Lower leg skin (tissue), 4 donors: ENCODE measurements at regions of chr9 and their contacts with region 1.

Region 1: GRCh38 chr9:34869390-34869789 is 88.7 kb upstream of the PHF24 start:
- DNase-seq: no peak
- H3K4me3 ChIP-seq: no peak overlapping the region
- CTCF ChIP-seq: no peak
- POLR2A ChIP-seq: no peak

Region 2: GRCh38 chr9:34777666-34778065 is 91.7 kb before region 1 on chr9:
- intact Hi-C with region 1: loop called (anchors 10 kb)
- DNase-seq: no peak
- H3K4me3 ChIP-seq: no peak overlapping the region
- CTCF ChIP-seq: no peak
- POLR2A ChIP-seq: no peak

Region 3: DNA sequence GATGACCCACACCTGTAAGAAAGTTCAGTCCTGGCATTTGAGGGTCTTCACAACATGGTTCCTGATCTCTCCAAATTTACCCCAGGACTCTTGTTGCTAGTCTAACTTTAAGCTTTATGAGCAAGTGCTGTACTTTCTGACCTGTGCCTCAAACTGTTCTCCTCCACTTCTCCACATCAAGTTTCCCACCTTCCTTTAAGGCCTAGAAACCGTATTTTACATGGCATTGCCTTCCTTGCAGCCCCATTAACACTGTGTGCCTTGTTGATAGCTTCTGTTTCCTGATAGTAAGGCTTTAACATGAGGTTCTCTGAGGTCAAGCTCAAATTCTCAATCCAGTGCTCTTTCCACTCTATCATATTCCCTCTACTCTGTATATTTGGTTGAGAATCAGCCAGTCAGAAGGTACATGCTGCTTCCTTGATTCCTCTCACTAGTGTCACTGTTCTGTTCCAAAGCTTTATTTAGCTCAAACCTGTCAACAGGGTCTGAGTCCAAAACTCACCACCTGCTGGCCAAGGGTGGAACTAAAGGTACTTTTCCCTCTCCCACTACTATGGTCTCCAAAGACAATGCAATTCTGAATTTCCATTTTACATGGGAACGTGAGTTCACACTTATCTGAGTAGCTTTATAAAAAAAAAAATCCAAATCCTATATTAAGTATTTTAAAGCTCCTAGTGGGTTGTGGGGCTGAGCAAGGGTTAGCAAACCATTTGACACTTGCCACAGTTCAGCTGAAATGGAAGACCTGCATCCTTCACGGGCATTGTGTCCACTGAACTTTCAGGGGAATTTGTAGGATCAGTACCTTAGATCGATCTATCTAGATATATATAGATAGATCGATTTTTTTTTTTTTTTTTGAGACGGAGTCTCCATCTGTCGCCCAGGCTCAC is 181.9 kb after region 1 on chr9:
- intact Hi-C with region 1: no loop called
- DNase-seq: peak in 1 of 2 donors; percentile 81
- H3K4me3 ChIP-seq: no peak overlapping the region
- CTCF ChIP-seq: no peak
- POLR2A ChIP-seq: no peak